PC-9 (cell line): ENCODE measurements at regions of chr11 and their contacts with region 1.

Region 1: DNA sequence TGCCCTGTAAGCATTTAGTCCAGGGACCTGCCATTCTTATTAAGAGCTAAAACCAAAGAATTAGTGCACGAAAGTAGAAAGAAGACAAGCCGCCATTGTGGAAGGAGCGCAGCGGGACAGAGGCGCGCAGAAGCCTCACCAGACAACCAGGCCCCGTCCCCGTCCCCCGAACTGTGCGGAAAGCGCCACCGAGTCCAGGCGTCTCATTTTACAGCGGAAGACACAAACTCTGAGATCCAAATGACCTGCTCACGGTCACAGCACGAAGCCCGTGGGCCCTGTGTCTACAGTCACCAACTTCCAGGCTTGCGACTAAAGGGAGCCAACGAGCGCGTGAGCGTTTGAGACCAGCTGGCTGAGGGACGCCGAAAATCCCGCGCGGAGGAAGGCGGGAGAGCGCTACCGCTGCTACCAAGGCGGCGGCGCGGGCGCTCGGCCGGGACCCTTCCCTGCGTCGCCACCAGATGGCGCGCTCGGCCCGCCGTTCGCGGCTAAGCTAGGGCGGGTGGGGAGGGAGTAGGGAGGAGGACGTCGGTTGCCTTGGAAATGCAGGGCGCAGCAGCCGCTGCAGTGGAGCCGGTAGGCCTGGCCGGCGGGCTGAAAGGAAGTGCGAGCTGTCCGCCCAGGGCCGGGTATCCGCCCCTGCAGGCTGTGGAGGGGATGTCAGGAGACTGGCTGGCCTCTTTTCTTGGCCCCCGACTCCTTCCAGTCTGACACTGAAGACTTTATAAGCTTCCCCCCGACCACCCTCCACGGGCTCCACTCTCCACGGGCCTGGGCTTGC is 434 bp upstream of the CCDC83 start:
- DNase-seq: peak; percentile 86 to 94
- H3K4me3 ChIP-seq: peak overlapping the region; percentile 65
- H3K27ac ChIP-seq: peak overlapping the region; percentile 48
- H3K4me1 ChIP-seq: peaks cover 8% of the 10 kb centered on the region
- H3K27me3 ChIP-seq: no peaks in the 10 kb centered on the region
- CTCF ChIP-seq: peak; percentile 91

Region 2: GRCh38 chr11:85694386-85694980 is 160.3 kb before region 1 on chr11:
- CTCF ChIA-PET with region 1: no interaction called
- POLR2A ChIA-PET with region 1: interaction called, 5 read pairs
- intact Hi-C with region 1: loop called (anchors 1 kb)
- DNase-seq: peak in 1 of 2 experiments; percentile 48
- H3K4me3 ChIP-seq: no peak overlapping the region
- H3K27ac ChIP-seq: no peak overlapping the region
- H3K4me1 ChIP-seq: peaks cover 14% of the 10 kb centered on the region; the same call in 1 of the 2 replicates
- H3K27me3 ChIP-seq: no peaks in the 10 kb centered on the region
- CTCF ChIP-seq: peak; percentile 82

Region 3: DNA sequence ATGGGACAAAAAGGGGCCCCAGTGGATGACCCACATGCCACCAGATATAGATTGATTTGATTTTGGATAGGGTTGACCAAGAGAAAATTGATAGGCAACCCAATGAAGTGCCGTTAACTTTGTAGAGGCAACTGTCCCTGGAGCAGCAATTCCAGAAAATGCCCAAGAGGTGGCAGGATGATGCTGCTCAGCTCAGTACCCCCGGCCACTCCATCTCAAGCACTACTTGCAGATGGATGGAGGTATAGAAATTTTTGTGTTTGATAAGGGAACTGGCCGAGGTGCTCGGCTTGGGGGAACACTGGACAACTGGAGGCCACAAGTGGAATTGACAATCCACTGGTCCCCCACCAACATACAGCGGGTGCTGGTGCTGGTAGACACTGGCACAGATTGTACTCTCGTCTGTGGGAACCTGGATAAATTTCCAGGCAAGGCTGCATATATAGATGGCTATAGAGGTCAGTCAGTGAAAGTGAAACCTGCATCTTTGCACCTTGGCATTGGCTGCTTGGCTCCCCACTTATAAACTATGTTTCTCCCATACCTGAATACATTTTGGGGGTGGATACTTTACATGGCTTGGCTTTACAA is 86.7 kb after region 1 on chr11:
- CTCF ChIA-PET with region 1: no interaction called
- POLR2A ChIA-PET with region 1: no interaction called
- intact Hi-C with region 1: loop called (anchors 2 kb)
- DNase-seq: peak in 1 of 2 experiments; percentile 22
- H3K4me3 ChIP-seq: no peak overlapping the region
- H3K27ac ChIP-seq: no peak overlapping the region
- H3K4me1 ChIP-seq: no peaks in the 10 kb centered on the region
- H3K27me3 ChIP-seq: no peaks in the 10 kb centered on the region
- CTCF ChIP-seq: peak; percentile 69

Region 4: GRCh38 chr11:86035164-86035563 is 180.4 kb after region 1 on chr11:
- CTCF ChIA-PET with region 1: no interaction called
- POLR2A ChIA-PET with region 1: no interaction called
- intact Hi-C with region 1: no loop called
- DNase-seq: no peak
- H3K4me3 ChIP-seq: no peak overlapping the region
- H3K27ac ChIP-seq: no peak overlapping the region
- H3K4me1 ChIP-seq: no peaks in the 10 kb centered on the region
- H3K27me3 ChIP-seq: no peaks in the 10 kb centered on the region
- CTCF ChIP-seq: no peak

Region 5: DNA sequence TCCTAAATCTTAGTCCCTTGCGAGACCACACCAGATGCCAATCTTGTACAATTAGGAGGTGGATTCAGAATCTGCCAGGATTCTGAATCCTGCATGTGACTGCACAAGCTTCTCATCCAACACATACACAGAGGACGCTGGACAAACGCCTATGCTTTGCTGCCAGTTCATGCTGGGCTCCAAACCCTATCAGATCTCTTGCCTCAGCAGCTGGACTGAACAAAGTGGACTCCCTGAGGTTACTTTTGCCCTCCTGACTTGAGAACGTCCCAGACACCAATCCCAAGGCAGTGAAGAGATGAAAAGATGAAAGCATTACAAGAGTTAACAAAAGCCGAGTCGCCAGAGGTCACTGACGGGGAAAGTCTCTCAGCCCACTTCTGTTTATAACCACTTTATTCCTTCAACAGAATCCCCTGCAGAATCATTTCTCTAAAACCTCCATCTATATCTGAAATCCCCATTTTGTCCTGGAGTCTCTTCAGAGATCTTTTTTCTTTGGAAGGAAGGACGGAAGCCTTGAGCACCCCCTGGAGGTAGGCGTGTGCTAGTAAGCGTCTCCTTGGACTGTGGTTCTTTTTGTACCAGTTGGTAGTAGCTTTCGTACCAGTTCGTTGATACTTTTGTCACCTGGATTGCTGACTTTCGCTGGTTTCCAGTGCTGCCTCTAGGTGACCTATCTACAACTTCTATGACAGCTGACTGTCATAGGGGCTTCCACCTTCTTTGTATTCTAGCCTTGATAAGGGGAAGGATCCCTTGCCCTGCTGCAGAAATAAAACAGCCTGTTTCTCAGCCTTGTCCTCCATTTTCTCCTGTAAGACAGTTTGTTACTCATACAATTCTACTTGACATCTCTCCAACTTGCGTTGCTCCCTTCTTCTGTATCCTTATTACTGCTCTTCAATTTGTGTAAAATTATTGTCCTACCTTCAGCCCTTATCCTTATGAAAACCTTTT is 363.7 kb after region 1 on chr11:
- CTCF ChIA-PET with region 1: no interaction called
- POLR2A ChIA-PET with region 1: no interaction called
- intact Hi-C with region 1: loop called (anchors 10 kb)
- DNase-seq: peak; percentile 46 to 56
- H3K4me3 ChIP-seq: no peak overlapping the region
- H3K27ac ChIP-seq: no peak overlapping the region
- H3K4me1 ChIP-seq: 0 out of 2 replicates have a peak, but pooled peaks cover 6% of the 10 kb centered on the region
- H3K27me3 ChIP-seq: no peaks in the 10 kb centered on the region
- CTCF ChIP-seq: peak; percentile 90

Region 6: GRCh38 chr11:86818466-86819192 is 963.9 kb after region 1 on chr11:
- CTCF ChIA-PET with region 1: no interaction called
- POLR2A ChIA-PET with region 1: no interaction called
- intact Hi-C with region 1: loop called (anchors 10 kb)
- DNase-seq: peak in 1 of 2 experiments; percentile 77
- H3K4me3 ChIP-seq: no peak overlapping the region
- H3K27ac ChIP-seq: no peak overlapping the region
- H3K4me1 ChIP-seq: peaks cover 20% of the 10 kb centered on the region
- H3K27me3 ChIP-seq: no peaks in the 10 kb centered on the region
- CTCF ChIP-seq: peak; percentile 94